ENCODE measurements at regions of chr11 and their contacts with region 1.

Region 1: DNA sequence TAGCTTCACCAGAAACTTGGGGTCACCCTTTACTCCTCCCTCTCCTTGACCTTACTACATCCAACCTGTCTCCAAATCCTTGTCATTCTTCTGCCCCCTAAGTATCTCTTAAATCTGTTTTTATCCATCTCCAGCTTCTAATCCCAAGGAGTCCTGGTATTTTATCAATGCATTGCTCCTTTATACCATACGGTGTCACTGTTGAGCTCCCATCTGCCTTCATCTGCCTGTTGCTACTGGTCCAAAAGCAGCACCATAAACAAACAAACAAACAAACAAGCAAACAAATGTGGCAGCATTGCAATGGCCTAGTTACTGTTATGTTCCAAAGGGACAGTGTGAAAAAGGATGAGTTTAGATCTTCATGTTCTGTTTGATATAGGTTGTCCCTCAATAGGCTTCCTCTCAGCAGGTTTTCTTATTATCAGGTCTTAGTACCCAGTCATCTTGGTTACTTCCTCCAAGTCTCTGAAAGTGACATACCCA is 34.2 kb downstream of the DNHD1 start:
- DNase-seq: no peak
- ATAC-seq: peak; percentile 66

Region 2: GRCh38 chr11:6362873-6363678 is 168.2 kb before region 1 on chr11:
- intact Hi-C with region 1: no loop called
- DNase-seq: peak; percentile 86
- ATAC-seq: peak; percentile 92

Region 3: DNA sequence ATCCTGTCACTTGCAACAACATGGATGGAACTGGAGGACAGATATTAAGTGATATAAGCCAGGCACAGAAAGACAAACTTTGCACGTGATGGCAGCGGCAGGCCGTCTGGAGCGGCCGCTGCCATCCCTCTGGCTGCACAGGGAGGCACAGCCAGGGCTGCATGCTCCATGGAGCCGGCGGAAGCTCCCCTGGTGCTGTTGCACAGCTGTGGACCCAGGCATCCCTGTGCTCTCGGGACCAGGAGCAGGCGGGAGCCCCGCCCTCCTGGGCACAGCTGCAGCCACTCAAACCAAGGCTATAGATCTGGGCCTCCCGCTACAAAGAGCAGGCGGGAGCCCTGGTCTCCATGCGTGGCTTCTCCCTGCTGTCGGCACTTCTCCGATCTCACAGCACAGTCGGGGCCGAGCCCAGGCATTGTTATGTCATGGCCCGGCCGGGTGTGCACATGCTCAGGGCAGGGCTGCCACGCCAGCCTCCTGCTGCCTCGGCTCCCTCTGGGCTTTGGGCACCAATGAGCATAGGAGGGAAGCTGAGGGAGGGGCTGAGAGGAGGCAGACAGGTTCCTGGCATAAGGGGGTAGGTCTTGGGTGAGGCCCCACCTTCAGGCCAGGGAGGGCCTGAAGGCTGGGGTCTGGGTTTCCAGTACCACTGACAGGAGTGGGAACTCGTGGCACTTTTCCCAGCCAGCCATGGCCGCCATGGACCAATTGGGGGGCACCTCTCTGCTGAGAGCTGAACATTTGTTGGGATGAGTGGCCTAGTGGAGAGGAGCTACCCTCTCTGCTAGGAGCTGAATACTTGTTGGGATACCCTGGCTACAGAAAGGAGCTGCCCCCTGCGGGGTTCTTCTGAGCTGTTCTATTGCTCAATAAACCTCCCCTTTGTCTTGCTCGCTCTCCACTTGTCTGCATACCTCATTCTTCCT is 55.4 kb after region 1 on chr11:
- intact Hi-C with region 1: loop called (anchors 10 kb)
- DNase-seq: peak; percentile 71
- ATAC-seq: peak; percentile 89

Region 4: GRCh38 chr11:6674862-6675261 is 143.6 kb after region 1 on chr11:
- intact Hi-C with region 1: loop called (anchors 10 kb)
- DNase-seq: no peak
- ATAC-seq: peak; percentile 43

Region 5: GRCh38 chr11:6705905-6706535 is 174.7 kb after region 1 on chr11:
- intact Hi-C with region 1: loop called (anchors 10 kb)
- DNase-seq: no peak
- ATAC-seq: peak; percentile 60